ENCODE measurements at regions of chr10 and their contacts with region 1.

Region 1: DNA sequence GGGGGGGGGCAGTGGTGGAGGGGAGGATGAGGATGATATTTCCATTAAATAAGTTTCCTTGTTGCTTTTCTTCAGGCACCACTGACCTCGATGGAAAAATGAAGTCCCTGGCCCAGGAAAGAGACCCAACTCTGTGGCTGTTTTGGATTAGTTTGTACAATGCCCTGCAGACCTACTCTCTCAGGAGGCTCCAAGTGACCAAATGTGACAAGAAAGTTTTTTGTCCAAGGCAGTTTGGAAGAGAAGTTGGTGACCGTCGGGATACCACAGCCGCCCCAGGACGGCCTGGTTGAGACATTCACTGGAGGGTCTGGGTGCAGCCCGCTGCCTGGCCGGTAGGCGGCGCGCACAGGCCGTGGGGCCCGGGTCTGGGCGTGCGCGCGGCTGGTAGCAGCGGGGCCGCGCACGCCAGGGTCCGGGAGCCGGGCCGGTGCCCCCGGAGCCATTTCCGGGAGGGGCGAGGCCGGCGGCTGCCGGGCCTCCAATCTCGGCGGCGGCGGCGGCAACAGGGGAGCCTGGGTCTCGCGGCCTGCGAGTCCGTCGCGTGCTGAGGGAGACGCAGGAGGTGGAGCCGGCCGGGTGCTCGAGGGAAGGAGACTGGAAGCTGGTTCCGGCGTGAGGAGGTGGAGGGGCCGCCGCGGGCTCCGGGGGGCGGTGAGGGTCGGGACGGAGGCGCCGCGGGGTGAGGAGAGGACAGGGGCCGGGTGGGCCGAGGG is at the start of gene SGPL1:
- DNase-seq: peak; percentile 55
- ATAC-seq: peak; percentile 82
- H3K4me3 ChIP-seq: peak within 1 kb of the TSS; percentile 77 to 81
- H3K27ac ChIP-seq: peak within 1 kb of the TSS; percentile 89
- H3K4me1 ChIP-seq: peaks cover 9 to 17% of the 10 kb centered on the region in 2 experiments; a peak in 3 of 4 replicates
- H3K27me3 ChIP-seq: no peaks in the 10 kb centered on the region
- CTCF ChIP-seq: peak; percentile 50 to 87 (median 86); a peak in 5 of 6 replicates
- POLR2A ChIP-seq: peak; percentile 27
- RAD21 ChIP-seq: peak; percentile 74
- total RNA-seq, gene SGPL1: 69.4 TPM

Region 2: GRCh38 chr10:70549962-70550458 is 265.7 kb before region 1 on chr10:
- CTCF ChIA-PET with region 1: no interaction called
- POLR2A ChIA-PET with region 1: no interaction called
- RAD21 ChIA-PET with region 1: no interaction called
- intact Hi-C with region 1: loop called (anchors 2 kb)
- DNase-seq: peak; percentile 42
- ATAC-seq: peak; percentile 89
- H3K4me3 ChIP-seq: no peak overlapping the region
- H3K27ac ChIP-seq: no peak overlapping the region
- H3K4me1 ChIP-seq: peaks cover 4 to 44% of the 10 kb centered on the region in 2 experiments; a peak in 3 of 4 replicates
- H3K27me3 ChIP-seq: no peaks in the 10 kb centered on the region
- CTCF ChIP-seq: peak; percentile 87 to 94 (median 89)
- POLR2A ChIP-seq: no peak
- RAD21 ChIP-seq: peak; percentile 97